GM12878 (cell line): ENCODE measurements at regions of chr17 and their contacts with region 1.

Region 1: GRCh38 chr17:5584383-5585286 is at the start of gene NLRP1:
- DNase-seq: peak; percentile 84
- ATAC-seq: peak; percentile 94
- H3K4me3 ChIP-seq: peak within 1 kb of the TSS; percentile 92
- H3K27ac ChIP-seq: peak within 1 kb of the TSS; percentile 63
- H3K4me1 ChIP-seq: peaks cover 30% of the 10 kb centered on the region
- H3K27me3 ChIP-seq: no peaks in the 10 kb centered on the region
- CTCF ChIP-seq: no peak
- EP300 ChIP-seq: no peak
- POLR2A ChIP-seq: peak; percentile 74
- RAD21 ChIP-seq: no peak
- polyA plus RNA-seq, gene NLRP1: 2.8 to 4.2 TPM

Region 2: DNA sequence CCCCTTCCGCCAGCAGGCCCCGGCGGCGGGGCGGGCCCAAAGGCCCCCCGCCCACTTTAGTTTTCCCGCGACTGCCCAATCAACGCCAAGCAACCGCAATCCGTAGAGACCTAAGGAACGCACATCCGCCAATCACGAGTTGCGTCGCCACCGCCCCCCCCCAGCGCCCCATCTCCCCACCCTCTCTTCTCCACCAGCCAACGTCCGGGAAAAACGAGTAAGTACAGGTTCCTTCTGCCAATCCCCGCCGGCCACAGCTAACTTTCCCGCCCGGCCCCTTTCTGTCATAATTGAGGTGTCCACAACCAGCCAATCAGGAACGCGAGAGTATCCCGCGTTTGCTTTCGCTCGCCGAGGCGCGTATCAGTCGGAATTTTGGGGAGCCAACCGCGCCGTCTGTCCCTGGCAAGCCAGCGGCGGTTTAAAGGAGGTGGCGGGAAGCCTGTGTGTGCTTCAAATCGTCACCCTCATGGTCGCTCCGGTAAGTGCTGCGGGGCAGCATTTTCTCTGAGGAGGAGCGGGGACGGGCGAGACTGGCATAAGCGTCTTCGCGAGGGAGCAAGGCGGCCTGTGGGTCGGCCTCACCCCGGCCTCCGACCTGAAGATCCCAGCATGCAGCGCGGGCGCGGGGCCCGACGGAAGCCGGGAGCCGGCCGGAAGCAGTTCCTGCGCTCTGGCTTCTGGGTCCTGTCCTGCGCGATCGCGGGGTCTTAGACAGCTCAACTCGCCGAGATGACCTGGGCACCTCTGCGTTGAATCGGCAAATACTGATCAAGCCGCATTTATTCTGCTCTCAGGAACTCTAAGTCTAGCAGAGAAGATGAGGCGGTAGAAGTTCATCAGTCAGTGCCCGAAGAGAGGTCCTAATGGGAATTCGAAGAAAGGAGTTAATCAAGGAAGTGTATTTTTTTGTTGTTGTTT is 98.2 kb before region 1 on chr17 and contains the start of gene MIS12:
- CTCF ChIA-PET with region 1: interaction called, 3 read pairs
- POLR2A ChIA-PET with region 1: no interaction called
- RAD21 ChIA-PET with region 1: no interaction called
- SMC1A ChIA-PET with region 1: no interaction called
- in situ Hi-C with region 1: no loop called
- intact Hi-C with region 1: loop called (anchors 2 kb)
- DNase-seq: peak; percentile 94
- ATAC-seq: peak; percentile 97
- H3K4me3 ChIP-seq: peak within 1 kb of the TSS; percentile 97
- H3K27ac ChIP-seq: peak within 1 kb of the TSS; percentile 99
- H3K4me1 ChIP-seq: peaks cover 12% of the 10 kb centered on the region; the same call in 1 of the 2 replicates
- H3K27me3 ChIP-seq: no peaks in the 10 kb centered on the region
- CTCF ChIP-seq: no peak
- EP300 ChIP-seq: no peak; a peak in 1 of 4 replicates
- POLR2A ChIP-seq: peak; percentile 98
- RAD21 ChIP-seq: no peak
- polyA plus RNA-seq, gene MIS12: 19.9 to 24.0 TPM

Region 3: DNA sequence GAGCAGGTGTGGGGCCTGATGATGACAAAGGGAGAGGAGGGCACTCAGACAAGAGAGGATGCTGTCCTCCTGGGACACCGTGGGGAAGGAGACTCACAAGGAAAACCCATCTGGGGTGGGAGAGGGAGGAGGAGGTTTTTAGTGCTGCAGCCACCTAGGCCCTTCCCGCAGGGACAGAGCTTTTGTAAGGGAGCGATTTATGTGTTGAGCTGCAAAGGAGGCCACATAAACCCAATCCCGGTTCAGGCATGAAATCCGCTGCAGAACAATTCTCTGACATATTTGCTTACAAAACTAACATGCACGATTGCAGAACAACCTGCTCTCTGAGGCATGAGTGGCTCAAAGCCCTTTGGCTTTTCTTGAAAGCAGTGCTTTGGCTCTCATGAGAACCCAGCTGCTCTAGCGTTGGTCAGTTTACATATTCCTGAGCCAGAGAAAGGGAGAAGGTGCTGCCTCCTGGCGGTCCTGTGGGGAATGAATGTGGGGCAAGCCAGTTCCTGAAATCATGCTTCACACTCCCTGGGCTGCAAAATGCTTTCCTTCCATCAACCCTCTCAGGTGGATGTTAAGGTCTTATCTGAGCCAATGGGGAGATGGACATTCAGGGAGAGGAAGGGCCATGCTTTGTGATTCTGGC is 122.1 kb after region 1 on chr17:
- CTCF ChIA-PET with region 1: interaction called, 50 read pairs
- POLR2A ChIA-PET with region 1: no interaction called
- RAD21 ChIA-PET with region 1: interaction called, 12 read pairs
- SMC1A ChIA-PET with region 1: interaction called, 5 read pairs
- in situ Hi-C with region 1: loop called (anchors 5 kb)
- intact Hi-C with region 1: loop called (anchors 1 kb)
- DNase-seq: peak; percentile 8
- ATAC-seq: peak; percentile 82
- H3K4me3 ChIP-seq: no peak overlapping the region
- H3K27ac ChIP-seq: no peak overlapping the region
- H3K4me1 ChIP-seq: no peaks in the 10 kb centered on the region
- H3K27me3 ChIP-seq: peaks cover under 1 to 2% of the 10 kb centered on the region in 2 experiments; a peak in 3 of 4 replicates
- CTCF ChIP-seq: peak; percentile 82 to 92 (median 87)
- EP300 ChIP-seq: no peak
- POLR2A ChIP-seq: no peak
- RAD21 ChIP-seq: peak; percentile 68

Region 4: DNA sequence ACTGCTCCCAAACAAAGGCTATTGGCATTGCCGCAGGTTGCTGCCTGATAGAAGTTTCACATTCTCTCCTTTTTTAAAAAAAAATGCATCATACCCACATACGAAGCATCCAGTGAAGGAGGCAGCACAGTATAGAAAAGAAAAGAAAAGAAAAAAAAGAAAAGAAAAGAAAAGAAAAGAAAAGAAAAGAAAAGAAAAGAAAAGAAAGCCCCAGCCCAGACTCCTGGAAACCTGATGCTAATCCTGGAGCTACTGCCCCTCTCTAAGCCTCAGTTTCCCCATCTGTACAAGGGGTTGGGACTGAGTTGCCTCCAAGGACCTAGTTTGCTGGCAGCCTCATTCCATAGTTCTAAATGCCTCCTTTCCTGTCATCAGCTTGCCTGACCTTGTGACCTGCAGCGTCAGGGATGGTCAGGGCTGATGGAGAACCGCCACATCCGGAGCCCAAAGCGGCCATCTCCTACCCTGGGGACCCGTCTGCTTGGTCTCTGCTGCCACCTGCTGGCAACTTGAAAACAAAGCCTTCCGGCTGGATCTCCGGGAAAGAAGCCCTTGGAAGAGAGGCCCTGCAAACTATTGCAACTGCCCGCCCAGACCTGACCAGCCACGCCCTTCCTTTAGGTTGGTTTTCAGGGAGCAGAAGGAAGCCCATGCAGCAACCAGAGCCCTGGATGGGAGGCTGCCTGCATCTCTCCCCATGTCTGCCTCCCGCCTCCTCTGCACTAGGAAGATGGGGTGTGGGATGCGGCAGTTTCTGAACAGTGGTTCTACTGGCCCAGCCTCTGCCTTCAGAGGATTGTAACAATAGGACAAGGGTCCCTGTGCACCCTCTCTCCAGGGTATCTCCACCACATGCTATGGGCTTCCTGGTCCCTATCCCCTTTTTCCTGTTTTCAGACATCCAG is 837.3 kb after region 1 on chr17:
- CTCF ChIA-PET with region 1: interaction called, 9 read pairs
- POLR2A ChIA-PET with region 1: no interaction called
- RAD21 ChIA-PET with region 1: interaction called, 6 read pairs
- SMC1A ChIA-PET with region 1: interaction called, 4 read pairs
- in situ Hi-C with region 1: loop called (anchors 5 kb)
- intact Hi-C with region 1: loop called (anchors 1 kb)
- DNase-seq: no peak
- ATAC-seq: peak; percentile 96
- H3K4me3 ChIP-seq: no peak overlapping the region
- H3K27ac ChIP-seq: no peak overlapping the region
- H3K4me1 ChIP-seq: peaks cover 1% of the 10 kb centered on the region
- H3K27me3 ChIP-seq: no peaks in the 10 kb centered on the region; a peak in 2 of 4 replicates
- CTCF ChIP-seq: peak; percentile 75 to 92 (median 83)
- EP300 ChIP-seq: no peak
- POLR2A ChIP-seq: no peak
- RAD21 ChIP-seq: peak; percentile 94

Region 5: DNA sequence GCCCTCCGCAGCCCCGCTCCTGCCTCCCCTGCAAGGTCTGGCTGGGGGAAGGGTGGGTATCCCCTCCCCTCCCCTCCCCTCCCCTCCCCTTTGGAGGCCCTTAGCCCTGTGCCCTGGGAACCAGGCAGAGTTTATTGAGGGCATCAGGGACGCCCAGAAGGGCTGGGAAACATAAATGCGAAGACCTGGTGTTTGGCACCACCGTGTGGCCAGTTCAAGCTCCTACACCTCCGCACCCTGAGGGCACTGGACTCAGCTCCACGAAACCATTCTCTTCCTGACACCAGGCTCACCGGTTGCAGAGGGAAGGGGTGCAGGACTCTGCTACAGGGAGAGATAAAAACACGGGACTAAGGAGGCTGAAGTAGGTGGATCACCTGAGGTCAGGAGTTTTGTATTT is 851.3 kb after region 1 on chr17:
- CTCF ChIA-PET with region 1: interaction called, 8 read pairs
- POLR2A ChIA-PET with region 1: no interaction called
- RAD21 ChIA-PET with region 1: interaction called, 5 read pairs
- SMC1A ChIA-PET with region 1: no interaction called
- in situ Hi-C with region 1: no loop called
- intact Hi-C with region 1: loop called (anchors 5 kb)
- DNase-seq: no peak
- ATAC-seq: peak; percentile 96
- H3K4me3 ChIP-seq: no peak overlapping the region
- H3K27ac ChIP-seq: no peak overlapping the region
- H3K4me1 ChIP-seq: no peaks in the 10 kb centered on the region
- H3K27me3 ChIP-seq: no peaks in the 10 kb centered on the region
- CTCF ChIP-seq: peak; percentile 83 to 88 (median 85)
- EP300 ChIP-seq: no peak
- POLR2A ChIP-seq: no peak
- RAD21 ChIP-seq: peak; percentile 75